HepG2 (cell line): ENCODE measurements at regions of chr2 and their contacts with region 1.

Region 1: DNA sequence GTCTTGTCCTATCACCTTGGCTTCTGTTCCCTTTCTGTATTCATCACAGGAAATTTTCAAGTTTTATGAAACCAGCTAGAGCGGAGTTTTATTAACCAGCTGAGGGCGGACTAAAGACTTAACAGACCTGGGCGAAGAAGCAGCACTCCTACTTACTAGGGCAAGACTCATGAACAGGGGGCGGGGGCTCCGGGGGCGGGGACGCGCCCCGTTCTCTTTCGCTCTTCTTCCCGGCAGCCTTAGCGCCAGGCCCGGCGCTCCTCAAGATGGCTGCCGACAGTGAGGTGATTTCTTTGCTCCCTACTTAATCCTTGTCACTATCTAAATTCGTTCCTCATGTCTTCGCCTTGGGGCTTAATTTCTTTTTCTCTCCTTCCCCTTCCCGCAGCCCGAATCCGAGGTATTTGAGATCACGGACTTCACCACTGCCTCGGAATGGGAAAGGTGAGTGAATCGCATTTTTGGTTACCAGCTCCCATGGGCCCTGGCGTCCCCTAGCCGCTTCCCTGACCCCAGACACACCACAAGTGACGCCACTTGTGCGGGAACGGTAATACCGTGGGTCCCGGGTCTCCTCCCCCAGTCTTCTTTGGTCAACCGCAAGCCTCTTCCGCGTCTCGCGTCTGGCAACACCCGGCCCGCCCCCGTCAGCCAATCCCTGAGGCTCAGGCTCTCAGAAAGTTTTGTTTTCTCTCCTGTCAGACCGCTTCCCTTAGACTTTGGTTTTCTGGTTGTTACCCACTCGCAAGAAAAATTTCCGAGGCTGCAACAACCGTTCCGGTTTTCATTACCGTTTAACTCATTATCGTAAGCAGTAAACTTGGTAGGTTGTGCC is at the start of gene RAB3GAP1:
- DNase-seq: peak; percentile 72
- ATAC-seq: peak; percentile 85
- H3K4me3 ChIP-seq: peak within 1 kb of the TSS; percentile 76 to 85 (median 77)
- H3K27ac ChIP-seq: peak within 1 kb of the TSS; percentile 88
- H3K4me1 ChIP-seq: peaks cover 76% of the 10 kb centered on the region
- H3K27me3 ChIP-seq: no peaks in the 10 kb centered on the region; a peak in 1 of 5 replicates
- CTCF ChIP-seq: no peak
- EP300 ChIP-seq: no peak
- POLR2A ChIP-seq: peak; percentile 91 to 97
- RAD21 ChIP-seq: no peak
- total RNA-seq, gene RAB3GAP1: 48.8 and 61.5 TPM in 2 replicates

Region 2: DNA sequence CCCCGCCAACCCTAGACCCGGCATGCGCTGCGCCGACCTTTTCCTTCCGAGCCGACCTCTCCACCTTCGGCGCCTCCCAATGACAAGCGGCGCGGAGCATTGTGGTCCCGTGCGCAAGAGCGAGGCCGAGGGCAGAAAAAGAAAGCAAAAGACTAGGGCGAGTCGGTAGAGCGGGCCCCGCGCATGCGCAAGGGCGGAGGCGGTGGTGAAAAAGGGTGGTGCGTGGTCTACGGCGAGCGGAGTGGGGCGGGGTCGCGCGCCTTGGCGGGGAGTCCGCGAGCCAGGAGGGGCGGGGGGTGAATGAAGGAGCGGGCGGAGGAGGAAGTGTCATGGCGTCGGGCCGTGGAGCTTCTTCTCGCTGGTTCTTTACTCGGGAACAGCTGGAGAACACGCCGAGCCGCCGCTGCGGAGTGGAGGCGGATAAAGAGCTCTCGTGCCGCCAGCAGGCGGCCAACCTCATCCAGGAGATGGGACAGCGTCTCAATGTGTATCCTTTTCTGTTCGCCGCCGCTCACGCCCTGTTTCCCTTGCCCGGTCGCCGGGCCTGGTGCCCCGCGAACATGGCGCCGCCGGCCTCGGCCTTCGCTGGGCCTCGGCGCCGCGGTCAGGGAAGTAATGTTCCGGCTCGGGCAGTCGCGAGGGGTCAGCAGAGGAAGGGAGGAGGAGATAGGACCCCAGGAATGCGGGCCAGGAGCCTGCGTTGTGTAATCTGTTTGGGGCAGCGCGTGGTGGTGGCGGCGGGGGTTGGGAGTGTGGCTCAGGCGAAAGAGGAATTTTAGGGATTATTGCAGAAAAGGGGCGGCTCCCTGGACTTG is 133.5 kb before region 1 on chr2 and contains the start of gene CCNT2:
- CTCF ChIA-PET with region 1: no interaction called
- POLR2A ChIA-PET with region 1: interaction called, 10 read pairs
- in situ Hi-C with region 1: no loop called
- intact Hi-C with region 1: loop called (anchors 10 kb)
- DNase-seq: peak; percentile 99
- ATAC-seq: peak; percentile 88
- H3K4me3 ChIP-seq: peak within 1 kb of the TSS; percentile 77 to 100 (median 96)
- H3K27ac ChIP-seq: peak within 1 kb of the TSS; percentile 99
- H3K4me1 ChIP-seq: peaks cover 41% of the 10 kb centered on the region
- H3K27me3 ChIP-seq: no peaks in the 10 kb centered on the region; a peak in 1 of 5 replicates
- CTCF ChIP-seq: 0 out of 2 replicates have a peak, but pooled peaks have one; percentile 17
- EP300 ChIP-seq: peak in 1 of 2 experiments; percentile 3; a peak in 2 of 4 replicates
- POLR2A ChIP-seq: peak; percentile 84 to 87
- RAD21 ChIP-seq: peak; percentile 39; the same call in 1 of the 2 replicates
- total RNA-seq, gene CCNT2: 31.2 and 34.4 TPM in 2 replicates